ENCODE measurements at regions of chr5 and their contacts with region 1.

Region 1: GRCh38 chr5:41843456-41844370 is 26.5 kb downstream of the OXCT1 start:
- DNase-seq: peak in 2 of 4 donors; percentile 46 to 70
- ATAC-seq: peak; percentile 87
- H3K4me3 ChIP-seq: no peak overlapping the region
- H3K27ac ChIP-seq: no peak overlapping the region
- H3K4me1 ChIP-seq: no peaks in the 10 kb centered on the region
- H3K27me3 ChIP-seq: no peaks in the 10 kb centered on the region
- CTCF ChIP-seq: peak; percentile 66 to 68

Region 2: DNA sequence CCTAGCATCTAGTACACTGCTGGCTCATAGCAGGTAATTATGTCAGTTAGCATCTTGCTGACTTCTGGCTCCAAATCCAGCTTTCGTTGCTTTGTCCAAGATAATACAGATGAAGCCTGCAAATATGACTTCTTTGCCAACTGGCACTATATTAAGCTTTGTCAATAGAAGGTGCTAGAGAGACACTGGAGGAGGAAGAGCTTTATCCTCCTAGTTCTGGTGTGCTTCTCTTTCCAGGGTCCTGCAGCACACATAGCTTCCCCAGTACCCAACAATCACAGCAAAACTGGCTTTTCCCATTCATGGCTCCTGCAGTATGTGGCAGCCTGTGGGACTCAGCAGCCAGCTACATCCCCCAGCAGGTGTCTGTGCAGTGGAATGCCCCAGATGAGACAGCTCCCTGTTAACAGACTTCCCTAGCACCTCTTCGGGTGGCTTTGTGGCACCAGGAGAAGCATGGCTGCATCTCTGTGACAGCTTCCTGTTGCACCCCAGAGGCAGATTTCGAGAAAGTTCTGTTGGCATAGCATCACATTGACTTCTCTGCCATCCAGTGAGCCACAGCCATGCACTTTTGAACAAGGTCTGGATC is 121.3 kb before region 1 on chr5:
- intact Hi-C with region 1: loop called in 1 of 2 experiments (anchors 10 kb)
- DNase-seq: no peak
- ATAC-seq: no peak
- H3K4me3 ChIP-seq: no peak overlapping the region
- H3K27ac ChIP-seq: no peak overlapping the region
- H3K4me1 ChIP-seq: no peaks in the 10 kb centered on the region
- H3K27me3 ChIP-seq: no peaks in the 10 kb centered on the region
- CTCF ChIP-seq: no peak

Region 3: GRCh38 chr5:42005561-42006153 is 161.9 kb after region 1 on chr5:
- intact Hi-C with region 1: no loop called
- DNase-seq: peak in 2 of 4 donors; percentile 4 to 21
- ATAC-seq: peak; percentile 59
- H3K4me3 ChIP-seq: no peak overlapping the region
- H3K27ac ChIP-seq: no peak overlapping the region
- H3K4me1 ChIP-seq: no peaks in the 10 kb centered on the region
- H3K27me3 ChIP-seq: no peaks in the 10 kb centered on the region
- CTCF ChIP-seq: peak; percentile 60 to 66